ENCODE measurements at regions of chr3 and their contacts with region 1.

Region 1: GRCh38 chr3:115092220-115092791 is 54.8 kb downstream of the ZBTB20 start:
- DNase-seq: peak; percentile 68
- ATAC-seq: peak; percentile 99

Region 2: GRCh38 chr3:114383875-114384557 is 708.3 kb before region 1 on chr3:
- intact Hi-C with region 1: loop called (anchors 10 kb)
- DNase-seq: peak; percentile 84
- ATAC-seq: peak; percentile 83

Region 3: DNA sequence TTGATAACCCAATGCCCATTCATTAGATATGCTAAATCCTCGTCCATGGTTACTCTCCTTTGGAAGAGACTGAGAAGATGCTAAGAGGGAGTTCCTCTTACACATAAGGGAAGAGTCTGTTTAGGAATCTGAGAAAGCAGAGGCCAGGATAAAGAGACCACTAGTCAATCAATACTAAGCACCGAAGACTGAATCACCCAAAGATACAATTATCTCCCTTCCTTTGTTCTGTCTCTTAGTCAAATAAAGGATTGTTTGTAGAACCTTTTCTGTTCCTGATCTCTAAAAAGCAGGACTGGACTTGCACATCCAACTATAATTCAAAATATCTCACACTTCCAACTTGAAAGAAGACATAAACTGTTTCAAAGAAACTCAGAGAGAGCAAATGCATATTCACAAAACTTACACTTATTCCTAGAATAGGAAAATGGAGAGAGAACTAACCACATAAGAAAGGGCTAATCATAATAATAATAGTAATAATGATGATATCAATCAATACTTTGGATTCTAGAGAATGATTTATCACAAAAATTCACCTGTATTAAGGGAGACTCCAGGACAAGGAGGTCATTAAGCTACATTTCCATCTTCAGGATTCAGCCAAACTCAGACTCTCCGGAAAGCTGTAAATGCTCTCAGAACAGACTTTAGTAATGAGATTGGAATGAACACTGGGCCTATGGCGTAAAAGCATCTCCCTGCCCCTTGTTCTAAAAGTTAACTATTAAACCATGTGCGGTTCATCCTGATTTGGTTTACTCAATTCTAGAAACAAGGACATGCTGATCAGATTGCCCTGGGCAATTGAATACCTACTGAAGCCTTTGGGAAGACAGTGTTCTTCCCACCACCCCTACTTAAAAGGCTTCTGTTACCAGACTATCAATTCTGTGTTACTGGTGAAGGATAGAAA is 346.7 kb before region 1 on chr3:
- intact Hi-C with region 1: no loop called
- DNase-seq: no peak
- ATAC-seq: peak; percentile 76

Region 4: DNA sequence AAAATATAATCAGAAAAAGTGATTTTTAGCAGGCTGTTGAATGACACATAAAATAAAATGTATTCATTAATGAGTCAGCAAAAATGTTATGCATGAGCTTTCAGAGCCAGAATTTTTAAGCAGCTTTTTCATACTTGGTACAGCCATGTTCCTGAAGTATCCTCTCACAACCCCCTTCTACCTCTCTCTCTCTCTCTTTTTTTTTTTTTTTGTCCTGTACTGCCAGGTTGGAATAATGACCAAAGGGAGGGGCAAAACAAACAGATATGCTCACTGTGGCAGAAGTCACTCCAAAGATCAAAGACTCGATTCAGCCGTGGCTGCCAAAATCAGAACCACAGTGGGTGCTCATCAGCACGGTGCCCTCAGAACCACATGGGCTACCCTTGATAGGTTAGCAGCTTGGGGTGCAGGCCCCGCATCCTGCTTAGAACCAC is 328.2 kb before region 1 on chr3:
- intact Hi-C with region 1: no loop called
- DNase-seq: no peak
- ATAC-seq: no peak

Region 5: DNA sequence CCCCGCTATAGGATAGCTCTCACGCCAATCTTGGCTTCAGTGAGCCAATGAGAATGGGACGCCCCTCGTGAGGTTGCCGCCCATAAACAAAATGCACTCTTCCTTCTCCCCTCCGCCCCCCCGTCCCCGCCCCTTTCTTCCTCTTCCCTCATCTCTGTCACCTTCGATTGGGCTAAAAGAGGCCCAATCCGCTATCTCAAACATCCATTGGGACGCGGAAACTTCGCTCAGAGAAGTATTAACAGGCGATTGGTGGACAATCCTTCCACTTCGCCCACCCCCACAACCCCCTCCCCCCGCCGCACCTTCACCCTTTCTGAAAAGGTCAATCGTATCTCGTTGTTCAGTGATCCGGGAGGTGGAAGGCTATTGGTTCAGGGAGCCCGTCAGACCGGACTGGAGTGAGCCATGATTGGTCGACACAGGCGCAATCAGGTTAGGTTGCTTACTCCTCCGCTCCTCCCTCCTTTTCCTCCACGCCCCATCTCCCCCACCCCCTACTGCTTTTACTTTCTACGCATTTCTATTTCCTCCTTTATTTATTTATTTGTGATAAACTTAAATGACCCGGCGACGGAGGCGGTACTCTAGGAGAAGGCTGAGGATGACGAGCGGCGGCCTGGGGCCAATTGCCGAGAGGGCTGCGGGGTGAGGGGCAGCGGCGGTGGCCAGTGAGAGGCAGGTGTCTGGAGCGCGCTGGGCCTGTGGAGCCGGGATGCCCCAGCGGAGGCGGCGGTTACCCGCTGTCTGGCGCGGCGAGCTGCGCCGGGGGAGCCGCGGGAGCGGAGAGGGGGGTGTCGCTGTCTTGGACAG is 55.2 kb after region 1 on chr3:
- intact Hi-C with region 1: loop called (anchors 10 kb)
- DNase-seq: peak; percentile 99
- ATAC-seq: peak; percentile 90